B cell (primary cell): ENCODE measurements at regions of chr3 and their contacts with region 1.

Region 1: DNA sequence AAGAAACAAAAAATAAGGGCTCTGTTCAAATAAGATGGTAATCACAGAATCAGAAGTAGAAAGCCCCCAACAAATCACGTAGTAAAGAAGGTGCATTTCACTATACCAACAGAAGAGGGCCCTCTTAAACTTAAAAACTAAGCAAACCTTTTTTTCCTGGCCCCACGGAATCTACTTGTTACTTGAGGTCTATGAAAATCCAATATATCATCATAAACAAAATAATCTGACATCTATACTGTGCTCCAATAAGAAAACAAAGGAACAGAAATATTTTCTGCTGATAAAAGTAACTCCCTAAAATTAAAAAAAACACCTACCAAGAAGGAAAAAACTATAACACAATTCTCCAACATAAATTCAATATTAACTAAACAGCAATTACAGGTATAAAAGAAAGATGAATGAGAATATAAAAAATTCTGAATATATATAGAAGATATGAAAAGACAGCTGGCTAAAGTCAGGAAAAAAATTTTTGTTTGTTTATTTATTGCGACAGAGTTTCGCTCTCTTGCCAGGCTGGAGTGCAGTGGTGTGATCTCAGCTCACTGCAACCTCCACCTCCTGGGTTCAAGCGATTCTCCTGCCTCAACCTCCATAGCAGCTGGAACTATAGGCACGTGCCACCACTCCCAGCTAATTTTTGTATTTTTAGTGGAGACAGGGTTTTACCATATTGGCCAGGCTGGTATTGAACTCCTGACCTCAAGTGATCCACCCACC is 81.8 kb downstream of the CLASP2 start:
- DNase-seq: peak; percentile 58
- ATAC-seq: no peak
- H3K4me3 ChIP-seq: no peak overlapping the region
- H3K4me3 Mint-ChIP-seq: no peak overlapping the region
- H3K27ac ChIP-seq: no peak overlapping the region
- H3K27ac Mint-ChIP-seq: no peak overlapping the region
- H3K4me1 ChIP-seq: no peaks in the 10 kb centered on the region
- H3K4me1 Mint-ChIP-seq: no peaks in the 10 kb centered on the region
- H3K27me3 ChIP-seq: no peaks in the 10 kb centered on the region
- H3K27me3 Mint-ChIP-seq: no peaks in the 10 kb centered on the region
- CTCF ChIP-seq: peak; percentile 76

Region 2: GRCh38 chr3:33773637-33774036 is 137.3 kb after region 1 on chr3:
- CTCF ChIA-PET with region 1: interaction called, 21 read pairs
- POLR2A ChIA-PET with region 1: no interaction called
- intact Hi-C with region 1: no loop called
- DNase-seq: no peak
- ATAC-seq: no peak
- H3K4me3 ChIP-seq: no peak overlapping the region
- H3K4me3 Mint-ChIP-seq: no peak overlapping the region
- H3K27ac ChIP-seq: no peak overlapping the region
- H3K27ac Mint-ChIP-seq: no peak overlapping the region
- H3K4me1 ChIP-seq: no peaks in the 10 kb centered on the region
- H3K4me1 Mint-ChIP-seq: no peaks in the 10 kb centered on the region
- H3K27me3 ChIP-seq: no peaks in the 10 kb centered on the region
- H3K27me3 Mint-ChIP-seq: peaks cover 5% of the 10 kb centered on the region
- CTCF ChIP-seq: no peak

Region 3: DNA sequence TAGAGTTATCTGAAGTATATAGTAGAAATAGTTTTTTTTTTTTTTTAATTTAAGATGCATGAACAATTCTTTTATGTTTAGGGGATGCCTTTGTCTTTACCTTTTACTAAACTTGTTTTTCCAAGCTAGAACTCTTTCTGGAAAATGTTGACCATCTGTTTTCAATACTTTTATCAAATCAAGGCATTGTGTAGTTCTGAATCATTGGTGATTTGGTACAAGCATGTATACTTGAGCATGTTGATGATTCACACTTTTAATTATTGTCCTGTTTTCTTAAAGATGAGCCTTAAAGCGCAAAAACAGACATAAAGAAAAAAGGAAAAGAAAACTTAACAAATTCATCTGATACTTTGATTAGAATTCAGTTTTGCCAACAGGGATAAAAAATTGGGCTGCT is 190.4 kb after region 1 on chr3:
- CTCF ChIA-PET with region 1: no interaction called
- POLR2A ChIA-PET with region 1: no interaction called
- intact Hi-C with region 1: no loop called
- DNase-seq: no peak
- ATAC-seq: no peak
- H3K4me3 ChIP-seq: no peak overlapping the region
- H3K4me3 Mint-ChIP-seq: no peak overlapping the region
- H3K27ac ChIP-seq: no peak overlapping the region
- H3K27ac Mint-ChIP-seq: no peak overlapping the region
- H3K4me1 ChIP-seq: peaks cover 0 to 2% of the 10 kb centered on the region in 2 donors
- H3K4me1 Mint-ChIP-seq: peaks cover 13% of the 10 kb centered on the region
- H3K27me3 ChIP-seq: no peaks in the 10 kb centered on the region
- H3K27me3 Mint-ChIP-seq: no peaks in the 10 kb centered on the region
- CTCF ChIP-seq: no peak

Region 4: GRCh38 chr3:33915791-33916546 is 279.7 kb after region 1 on chr3:
- CTCF ChIA-PET with region 1: no interaction called
- POLR2A ChIA-PET with region 1: no interaction called
- intact Hi-C with region 1: no loop called
- DNase-seq: no peak
- ATAC-seq: no peak
- H3K4me3 ChIP-seq: no peak overlapping the region
- H3K4me3 Mint-ChIP-seq: no peak overlapping the region
- H3K27ac ChIP-seq: no peak overlapping the region
- H3K27ac Mint-ChIP-seq: no peak overlapping the region
- H3K4me1 ChIP-seq: no peaks in the 10 kb centered on the region
- H3K4me1 Mint-ChIP-seq: peaks cover 3% of the 10 kb centered on the region
- H3K27me3 ChIP-seq: no peaks in the 10 kb centered on the region
- H3K27me3 Mint-ChIP-seq: peaks cover 9% of the 10 kb centered on the region
- CTCF ChIP-seq: no peak